ENCODE measurements at regions of chr14 and their contacts with region 1.

Region 1: GRCh38 chr14:77457522-77458290 is at the starts of genes AHSA1 and VIPAS39:
- DNase-seq: peak; percentile 99
- H3K4me3 ChIP-seq: peak within 1 kb of the TSS; percentile 88
- H3K27ac ChIP-seq: peak within 1 kb of the TSS; percentile 95
- H3K4me1 ChIP-seq: peaks cover 14% of the 10 kb centered on the region
- H3K27me3 ChIP-seq: no peaks in the 10 kb centered on the region
- CTCF ChIP-seq: no peak
- total RNA-seq, gene AHSA1: 276 and 375 TPM in 2 replicates
- total RNA-seq, gene VIPAS39: 16.7 and 19.8 TPM in 2 replicates

Region 2: DNA sequence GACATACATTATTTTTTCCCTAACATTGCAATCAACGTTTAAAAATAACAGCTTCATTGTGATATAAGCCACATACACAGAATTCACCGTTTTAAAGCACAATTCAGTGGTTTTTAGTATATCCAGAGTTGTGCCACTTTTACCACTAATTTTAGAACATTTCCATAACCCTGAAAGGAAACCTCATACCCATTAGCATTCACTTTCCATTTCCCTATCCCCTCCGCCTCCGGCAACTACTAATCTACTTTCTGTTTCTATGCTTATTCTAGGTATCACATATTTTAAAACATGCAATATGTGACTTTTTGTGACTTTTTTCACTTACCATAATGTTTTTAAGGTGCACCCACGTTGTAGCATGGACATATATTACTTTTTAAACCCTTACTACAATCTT is 96.5 kb after region 1 on chr14:
- CTCF ChIA-PET with region 1: interaction called, 10 read pairs
- POLR2A ChIA-PET with region 1: no interaction called
- intact Hi-C with region 1: loop called (anchors 2 kb)
- DNase-seq: no peak
- H3K4me3 ChIP-seq: no peak overlapping the region
- H3K27ac ChIP-seq: no peak overlapping the region
- H3K4me1 ChIP-seq: no peaks in the 10 kb centered on the region
- H3K27me3 ChIP-seq: no peaks in the 10 kb centered on the region
- CTCF ChIP-seq: no peak

Region 3: DNA sequence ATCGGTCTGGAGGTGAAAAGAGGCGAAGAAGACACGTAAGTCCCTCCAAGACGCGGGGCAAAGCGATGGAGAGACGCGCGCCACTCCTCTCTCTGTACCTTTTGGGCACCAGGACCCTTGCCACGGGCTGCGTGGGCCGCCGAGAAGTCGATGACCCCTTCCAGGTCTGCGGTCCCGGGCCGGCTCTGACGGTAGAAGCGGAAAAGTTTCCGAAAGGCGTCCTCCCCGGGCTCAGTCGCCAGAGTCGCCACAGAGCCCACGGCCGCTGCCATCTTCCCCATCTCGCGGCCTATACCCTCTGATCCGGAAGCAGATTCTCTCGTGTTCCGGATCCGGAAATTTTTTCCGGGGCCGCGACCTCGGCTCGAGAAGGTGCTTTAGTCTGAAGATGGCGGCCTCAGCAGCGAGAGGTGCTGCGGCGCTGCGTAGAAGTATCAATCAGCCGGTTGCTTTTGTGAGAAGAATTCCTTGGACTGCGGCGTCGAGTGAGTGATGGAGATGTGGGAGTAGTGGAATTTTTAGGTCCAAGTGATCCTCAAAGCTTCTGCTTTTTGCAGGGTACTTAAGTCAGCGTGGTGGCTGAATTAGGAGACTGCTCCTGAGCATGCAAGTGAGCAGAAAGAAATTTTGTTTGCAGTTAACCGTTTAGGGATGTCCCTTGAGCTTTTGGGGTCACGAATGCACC is 250.2 kb after region 1 on chr14 and contains the starts of genes ALKBH1 and SLIRP:
- CTCF ChIA-PET with region 1: no interaction called
- POLR2A ChIA-PET with region 1: no interaction called
- intact Hi-C with region 1: loop called (anchors 2 kb)
- DNase-seq: peak; percentile 93
- H3K4me3 ChIP-seq: peak within 1 kb of the TSS; percentile 77
- H3K27ac ChIP-seq: peak within 1 kb of the TSS; percentile 31
- H3K4me1 ChIP-seq: peaks cover 19% of the 10 kb centered on the region
- H3K27me3 ChIP-seq: no peaks in the 10 kb centered on the region
- CTCF ChIP-seq: no peak
- total RNA-seq, gene ALKBH1: 19.4 and 22.3 TPM in 2 replicates
- total RNA-seq, gene SLIRP: 275 and 318 TPM in 2 replicates

Measured in A673 (cell line).